ENCODE measurements at regions of chr17 and their contacts with region 1.

Region 1: GRCh38 chr17:2041561-2042366 is at the start of gene OVCA2:
- DNase-seq: peak; percentile 96 to 99 (median 97)
- ATAC-seq: peak; percentile 94
- H3K4me3 ChIP-seq: peak within 1 kb of the TSS; percentile 74 to 75
- H3K4me3 Mint-ChIP-seq: peak within 1 kb of the TSS; percentile 85
- H3K27ac ChIP-seq: peak within 1 kb of the TSS; percentile 77 to 89
- H3K27ac Mint-ChIP-seq: peak within 1 kb of the TSS; percentile 92
- H3K4me1 ChIP-seq: peaks cover 15% of the 10 kb centered on the region
- H3K4me1 Mint-ChIP-seq: peaks cover 20% of the 10 kb centered on the region
- H3K27me3 ChIP-seq: no peaks in the 10 kb centered on the region
- H3K27me3 Mint-ChIP-seq: no peaks in the 10 kb centered on the region
- CTCF ChIP-seq: peak; percentile 42
- total RNA-seq, gene OVCA2: 38.7 to 48.2 TPM

Region 2: GRCh38 chr17:1298606-1299005 is 743.2 kb before region 1 on chr17:
- CTCF ChIA-PET with region 1: no interaction called
- POLR2A ChIA-PET with region 1: no interaction called
- intact Hi-C with region 1: no loop called
- DNase-seq: peak in 7 of 9 experiments; percentile 18 to 66 (median 56)
- ATAC-seq: peak; percentile 43
- H3K4me3 ChIP-seq: peak overlapping the region; percentile 8 to 24
- H3K4me3 Mint-ChIP-seq: peak overlapping the region; percentile 56
- H3K27ac ChIP-seq: no peak overlapping the region
- H3K27ac Mint-ChIP-seq: no peak overlapping the region
- H3K4me1 ChIP-seq: peaks cover 50% of the 10 kb centered on the region
- H3K4me1 Mint-ChIP-seq: peaks cover 38% of the 10 kb centered on the region
- H3K27me3 ChIP-seq: peaks cover 17 to 18% of the 10 kb centered on the region in 2 experiments
- H3K27me3 Mint-ChIP-seq: peaks cover 27% of the 10 kb centered on the region
- CTCF ChIP-seq: no peak

Region 3: GRCh38 chr17:1882836-1883235 is 158.9 kb before region 1 on chr17:
- CTCF ChIA-PET with region 1: interaction called, 4 read pairs
- POLR2A ChIA-PET with region 1: no interaction called
- intact Hi-C with region 1: loop called (anchors 2 kb)
- DNase-seq: peak in 5 of 9 experiments; percentile 4 to 60 (median 41)
- ATAC-seq: peak; percentile 42
- H3K4me3 ChIP-seq: no peak overlapping the region
- H3K4me3 Mint-ChIP-seq: no peak overlapping the region
- H3K27ac ChIP-seq: no peak overlapping the region
- H3K27ac Mint-ChIP-seq: no peak overlapping the region
- H3K4me1 ChIP-seq: no peaks in the 10 kb centered on the region
- H3K4me1 Mint-ChIP-seq: no peaks in the 10 kb centered on the region
- H3K27me3 ChIP-seq: no peaks in the 10 kb centered on the region
- H3K27me3 Mint-ChIP-seq: no peaks in the 10 kb centered on the region
- CTCF ChIP-seq: peak; percentile 33